Ascending aorta (tissue), 2 donors: ENCODE measurements at regions of chr16 and their contacts with region 1.

Region 1: GRCh38 chr16:88785106-88785924 is at the start of gene PIEZO1:
- DNase-seq: peak in 1 of 2 donors; percentile 88
- H3K4me3 ChIP-seq: peak within 1 kb of the TSS; percentile 93 to 95
- H3K27ac ChIP-seq: peak within 1 kb of the TSS; percentile 90 to 93
- H3K4me1 ChIP-seq: peaks cover 15 to 23% of the 10 kb centered on the region in 2 donors
- H3K27me3 ChIP-seq: no peaks in the 10 kb centered on the region
- CTCF ChIP-seq: peak; percentile 90 to 98 (median 95)
- total RNA-seq, gene PIEZO1: 428 TPM

Region 2: DNA sequence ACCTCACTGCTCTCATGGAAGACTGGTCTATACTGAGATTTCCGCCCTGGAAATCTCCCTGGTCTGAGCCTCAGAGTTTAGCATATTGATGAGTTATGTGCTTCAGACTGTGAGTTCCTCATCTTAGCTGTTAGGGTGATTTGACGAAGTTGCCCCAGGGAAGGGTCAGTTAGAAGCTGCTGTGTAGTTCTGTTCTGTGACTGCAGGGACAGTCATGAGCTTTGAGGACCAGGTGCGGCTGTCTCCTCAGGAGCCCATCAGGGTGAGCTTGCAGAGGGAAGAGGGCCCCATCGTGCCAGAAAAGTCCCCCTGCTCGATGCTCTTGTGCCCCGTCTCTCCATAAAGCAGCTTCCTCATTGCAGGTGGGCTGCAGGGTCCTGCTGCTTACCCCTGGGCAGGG is 175.2 kb before region 1 on chr16:
- intact Hi-C with region 1: no loop called
- DNase-seq: no peak
- H3K4me3 ChIP-seq: no peak overlapping the region
- H3K27ac ChIP-seq: no peak overlapping the region
- H3K4me1 ChIP-seq: no peaks in the 10 kb centered on the region
- H3K27me3 ChIP-seq: no peaks in the 10 kb centered on the region
- CTCF ChIP-seq: no peak

Region 3: DNA sequence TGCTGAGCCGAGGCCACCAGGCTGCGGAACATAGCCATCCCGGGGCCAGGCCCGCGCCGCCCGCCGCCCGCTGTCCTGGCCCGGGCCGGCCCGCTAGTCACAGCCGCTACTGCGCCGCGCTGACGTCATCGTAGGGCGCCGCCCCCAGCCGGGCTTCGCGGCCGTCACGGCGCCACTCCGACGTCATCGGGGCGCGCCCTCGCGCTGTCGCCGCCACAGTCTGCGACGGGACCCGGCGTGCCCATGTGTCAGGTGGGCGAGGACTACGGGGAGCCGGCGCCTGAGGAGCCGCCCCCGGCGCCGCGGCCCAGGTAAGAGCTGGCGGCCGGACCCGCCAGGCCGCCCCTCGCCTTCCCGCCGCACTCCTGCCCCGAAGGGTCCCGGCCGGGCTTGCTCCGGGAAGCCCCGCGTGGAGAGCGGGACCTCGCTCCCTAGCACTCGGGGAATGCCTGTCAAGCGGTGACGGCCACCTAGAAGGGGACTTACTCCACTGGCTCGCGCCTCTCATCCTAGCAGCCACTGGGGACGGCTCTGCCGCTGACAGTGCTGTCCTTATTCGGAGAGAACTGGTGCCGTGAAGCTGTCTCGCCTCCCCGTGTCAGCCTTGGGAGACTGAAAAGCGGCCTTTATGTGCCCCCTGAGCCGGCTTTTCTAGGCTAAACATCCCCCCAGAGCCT is 78.9 kb before region 1 on chr16 and contains the starts of genes CTU2 and RNF166:
- intact Hi-C with region 1: loop called (anchors 1 kb)
- DNase-seq: peak; percentile 64 to 94
- H3K4me3 ChIP-seq: peak within 1 kb of the TSS; percentile 94 to 98
- H3K27ac ChIP-seq: peak within 1 kb of the TSS; percentile 73 to 81
- H3K4me1 ChIP-seq: peaks cover 9 to 21% of the 10 kb centered on the region in 2 donors
- H3K27me3 ChIP-seq: no peaks in the 10 kb centered on the region
- CTCF ChIP-seq: no peak
- total RNA-seq, gene CTU2: 4.2 TPM
- total RNA-seq, gene RNF166: 44.3 TPM

Region 4: DNA sequence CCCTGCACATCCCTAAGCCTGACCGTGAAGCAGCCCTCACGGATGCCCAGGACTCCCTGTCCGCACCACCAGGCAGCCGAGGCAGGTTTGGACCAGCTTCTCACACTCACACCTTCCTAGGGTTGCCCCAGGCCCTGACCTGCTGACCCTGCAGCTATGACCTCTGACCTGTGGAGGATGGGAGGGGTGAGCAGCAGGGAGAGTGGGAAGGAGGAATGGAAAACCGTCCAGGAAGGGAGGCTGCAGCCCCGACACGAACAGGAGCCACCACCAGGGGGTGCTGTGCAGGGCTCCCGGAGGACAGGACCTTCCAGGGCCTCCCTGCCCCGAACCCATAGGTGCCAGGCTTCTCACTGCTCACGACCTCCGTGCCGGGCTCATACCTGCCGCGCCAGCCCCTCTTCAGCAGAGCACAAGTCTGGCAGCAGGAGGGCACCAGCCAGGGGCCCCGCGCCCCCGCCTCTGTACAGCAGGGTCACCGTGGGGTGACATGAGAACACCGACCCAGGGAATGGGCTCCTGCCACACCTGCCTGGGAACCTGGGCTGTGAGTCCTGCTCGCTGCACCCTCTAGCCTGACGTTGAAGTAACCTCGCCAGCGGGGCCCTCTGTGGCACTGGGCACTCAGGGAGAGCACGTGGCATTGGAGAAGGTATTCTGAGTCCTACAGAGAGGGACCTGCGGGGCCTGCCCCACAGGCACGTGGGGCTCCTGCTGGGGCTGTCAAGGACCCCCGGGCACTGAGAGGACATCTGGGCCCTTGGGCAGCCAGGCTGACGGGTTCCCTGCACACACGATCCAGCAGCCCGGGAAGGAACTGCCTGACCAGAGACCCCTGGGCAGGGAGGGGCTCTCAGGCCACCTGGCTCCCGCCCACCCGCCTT is 41.4 kb before region 1 on chr16:
- intact Hi-C with region 1: loop called (anchors 1 kb)
- DNase-seq: peak in 1 of 2 donors; percentile 86
- H3K4me3 ChIP-seq: no peak overlapping the region
- H3K27ac ChIP-seq: no peak overlapping the region
- H3K4me1 ChIP-seq: peaks cover 6 to 9% of the 10 kb centered on the region in 2 donors
- H3K27me3 ChIP-seq: no peaks in the 10 kb centered on the region
- CTCF ChIP-seq: peak; percentile 79 to 83 (median 80)

Region 5: GRCh38 chr16:88803264-88803987 is 18.1 kb after region 1 on chr16 and contains the start of gene CDT1:
- intact Hi-C with region 1: loop called (anchors 2 kb)
- DNase-seq: peak in 1 of 2 donors; percentile 86
- H3K4me3 ChIP-seq: peak within 1 kb of the TSS; percentile 50 to 63
- H3K27ac ChIP-seq: peak within 1 kb of the TSS in 1 of 2 donors; percentile 52
- H3K4me1 ChIP-seq: peaks cover 0 to 11% of the 10 kb centered on the region in 2 donors
- H3K27me3 ChIP-seq: no peaks in the 10 kb centered on the region
- CTCF ChIP-seq: no peak
- total RNA-seq, gene CDT1: not detected

Region 6: GRCh38 chr16:88856828-88857733 is 71.8 kb after region 1 on chr16 and contains the starts of genes GALNS and TRAPPC2L:
- intact Hi-C with region 1: loop called (anchors 2 kb)
- DNase-seq: peak; percentile 92 to 99
- H3K4me3 ChIP-seq: peak within 1 kb of the TSS; percentile 64 to 87
- H3K27ac ChIP-seq: peak within 1 kb of the TSS; percentile 54 to 66
- H3K4me1 ChIP-seq: peaks cover 13 to 14% of the 10 kb centered on the region in 2 donors
- H3K27me3 ChIP-seq: no peaks in the 10 kb centered on the region
- CTCF ChIP-seq: no peak
- total RNA-seq, gene GALNS: 62.2 TPM
- total RNA-seq, gene TRAPPC2L: 7.6 TPM